ENCODE measurements at regions of chr19 and their contacts with region 1.

Region 1: DNA sequence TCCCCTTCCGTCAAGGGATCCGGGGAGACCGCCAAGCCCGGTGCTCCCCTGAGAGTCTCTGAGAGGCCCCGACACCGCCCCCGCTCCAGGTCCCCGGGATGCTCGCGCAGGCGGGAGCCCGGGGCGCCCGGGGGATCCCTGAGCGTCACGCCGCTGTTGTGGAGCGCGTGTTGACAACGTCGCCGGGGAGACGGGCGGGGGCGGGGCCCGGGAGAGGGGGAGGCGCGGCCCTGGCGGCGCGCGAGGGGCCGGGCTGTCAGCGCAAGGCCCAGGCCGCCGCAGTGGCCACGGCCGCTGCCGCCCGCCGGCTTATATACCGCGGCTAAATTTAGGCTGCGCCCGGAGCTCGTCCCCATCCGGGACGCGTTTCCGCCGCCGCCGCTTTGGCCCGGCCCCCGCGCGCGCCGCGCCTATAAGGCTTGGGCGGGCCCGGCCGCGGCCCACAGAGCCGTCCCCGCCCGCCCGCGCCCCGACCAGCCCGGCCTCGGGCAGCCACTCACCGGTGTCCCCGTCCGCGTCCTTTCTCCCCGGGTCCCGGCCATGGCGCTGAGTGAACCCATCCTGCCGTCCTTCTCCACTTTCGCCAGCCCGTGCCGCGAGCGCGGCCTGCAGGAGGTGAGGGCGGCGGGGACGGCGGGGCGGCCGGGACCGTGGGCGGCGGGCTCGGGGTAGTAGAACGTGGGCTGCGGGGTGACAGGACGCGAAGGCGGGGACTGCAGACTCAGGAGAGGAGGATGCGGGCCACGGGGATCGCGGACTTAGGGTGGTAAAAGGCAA is at the start of gene KLF2:
- DNase-seq: peak; percentile 99
- H3K4me3 ChIP-seq: peak within 1 kb of the TSS; percentile 81 to 98 (median 94)
- H3K27ac ChIP-seq: peak within 1 kb of the TSS; percentile 85 to 99 (median 96)
- H3K4me1 ChIP-seq: peaks cover 17 to 73% (median 58%) of the 10 kb centered on the region in 6 donors
- H3K27me3 ChIP-seq: peaks cover 0 to 4% (median 0%) of the 10 kb centered on the region in 7 donors
- CTCF ChIP-seq: peak in 2 of 11 experiments; percentile 7 to 16
- POLR2A ChIP-seq: peak; percentile 95 to 97 (median 96)
- total RNA-seq, gene KLF2: 86.0 to 179 (median 106) TPM

Region 2: GRCh38 chr19:16371540-16371986 is 47.0 kb after region 1 on chr19:
- intact Hi-C with region 1: loop called (anchors 5 kb)
- DNase-seq: peak; percentile 98
- H3K4me3 ChIP-seq: peak overlapping the region in 5 of 8 donors; percentile 1 to 48 (median 6)
- H3K27ac ChIP-seq: peak overlapping the region; percentile 69 to 96 (median 90)
- H3K4me1 ChIP-seq: peaks cover 80 to 100% (median 99%) of the 10 kb centered on the region in 6 donors
- H3K27me3 ChIP-seq: peaks cover 0 to 31% (median 0%) of the 10 kb centered on the region in 7 donors
- CTCF ChIP-seq: peak in 4 of 11 experiments; percentile 14 to 36 (median 28)
- POLR2A ChIP-seq: peak in 1 of 3 donors; percentile 59

Measured in spleen (tissue), 13 donors.